ENCODE measurements at regions of chr7 and their contacts with region 1.

Region 1: DNA sequence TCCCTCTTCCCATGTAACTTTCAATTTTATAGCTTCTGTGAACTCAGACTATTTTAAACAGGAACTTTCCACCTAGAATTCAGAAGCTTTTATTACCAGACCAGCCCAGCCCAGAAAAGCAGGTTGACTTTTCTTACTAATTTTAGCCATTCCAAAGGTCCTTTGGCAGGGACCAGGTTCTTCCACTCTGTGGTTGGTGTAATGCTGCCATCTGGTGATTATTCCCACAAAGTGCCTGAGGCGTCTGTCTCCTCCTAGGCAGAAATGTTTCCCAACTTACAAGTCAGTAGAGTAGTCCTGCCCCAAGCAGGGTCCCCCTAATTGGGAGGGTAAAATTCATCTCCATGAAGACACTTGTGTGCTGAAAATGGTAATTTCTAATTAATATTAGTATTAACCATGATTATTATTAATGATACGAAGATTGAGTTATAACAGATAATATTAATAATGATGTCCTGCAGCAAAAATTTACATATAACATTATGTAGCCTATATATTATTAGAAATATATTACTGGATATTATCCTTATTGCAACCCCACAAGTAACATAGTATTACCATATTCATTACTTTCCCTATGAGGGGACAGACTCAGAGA is 53.0 kb upstream of the PPP1R17 start:
- DNase-seq: peak; percentile 62
- H3K4me3 ChIP-seq: no peak overlapping the region
- H3K27ac ChIP-seq: no peak overlapping the region
- H3K4me1 ChIP-seq: peaks cover 0 to 8% (median 3%) of the 10 kb centered on the region in 4 donors
- H3K27me3 ChIP-seq: no peaks in the 10 kb centered on the region
- CTCF ChIP-seq: peak; percentile 50 to 77 (median 67)
- EP300 ChIP-seq: no peak
- POLR2A ChIP-seq: no peak

Region 2: GRCh38 chr7:31134246-31135188 is 499.5 kb before region 1 on chr7:
- in situ Hi-C with region 1: loop called in 3 of 4 experiments (anchors 25 kb)
- intact Hi-C with region 1: no loop called
- DNase-seq: peak; percentile 61
- H3K4me3 ChIP-seq: no peak overlapping the region
- H3K27ac ChIP-seq: no peak overlapping the region
- H3K4me1 ChIP-seq: peaks cover 0 to 7% (median 0%) of the 10 kb centered on the region in 4 donors
- H3K27me3 ChIP-seq: no peaks in the 10 kb centered on the region
- CTCF ChIP-seq: peak; percentile 65 to 75 (median 70)
- EP300 ChIP-seq: no peak
- POLR2A ChIP-seq: no peak

Region 3: DNA sequence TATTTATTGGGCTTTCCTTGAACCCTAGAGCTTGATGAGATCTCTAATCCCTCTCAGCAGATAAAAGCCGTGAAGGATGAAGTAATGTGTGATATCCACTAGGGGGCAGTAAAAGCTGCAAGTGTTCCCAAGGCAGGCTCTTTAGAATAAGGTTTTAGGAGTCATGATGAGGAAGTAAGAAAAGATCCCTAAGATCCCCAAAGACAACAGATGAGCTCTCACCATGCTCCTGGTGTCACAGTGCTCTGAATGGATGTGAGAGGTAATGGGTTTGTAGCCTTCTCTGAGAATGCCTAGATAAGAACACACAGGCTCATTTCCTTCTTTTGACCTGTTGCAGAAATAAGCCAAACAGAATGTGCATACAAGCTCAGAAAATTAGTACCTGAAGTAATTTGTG is 190.5 kb before region 1 on chr7:
- in situ Hi-C with region 1: loop called in 2 of 4 experiments (anchors 25 kb)
- intact Hi-C with region 1: no loop called
- DNase-seq: no peak
- H3K4me3 ChIP-seq: no peak overlapping the region
- H3K27ac ChIP-seq: no peak overlapping the region
- H3K4me1 ChIP-seq: peaks cover 0 to 10% (median 3%) of the 10 kb centered on the region in 4 donors
- H3K27me3 ChIP-seq: no peaks in the 10 kb centered on the region
- CTCF ChIP-seq: peak; percentile 65 to 79 (median 72)
- EP300 ChIP-seq: no peak
- POLR2A ChIP-seq: no peak